GM10248 (cell line): ENCODE measurements at regions of chr9 and their contacts with region 1.

Region 1: GRCh38 chr9:123544007-123544827 is 188.2 kb downstream of the CRB2 start:
- DNase-seq: peak; percentile 50
- CTCF ChIP-seq: peak; percentile 82

Region 2: DNA sequence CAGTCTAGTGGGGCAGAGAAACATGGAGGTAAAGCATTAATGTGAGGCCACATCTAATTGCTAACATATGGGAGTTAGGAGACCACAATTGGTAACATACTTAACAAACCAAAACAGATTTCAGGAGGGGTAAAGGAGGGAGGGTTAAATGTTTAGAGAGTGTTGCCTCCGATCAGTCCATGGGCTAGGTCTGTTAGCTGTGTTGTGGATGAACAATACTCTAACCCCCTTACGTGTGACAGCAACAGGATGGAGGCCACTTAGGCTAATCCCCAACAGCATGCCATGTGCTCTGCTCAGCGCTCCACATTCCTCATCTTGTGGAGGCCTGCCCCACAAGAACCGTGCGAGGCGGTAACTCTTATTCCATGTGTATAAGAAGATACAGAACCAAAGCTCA is 21.2 kb before region 1 on chr9:
- CTCF ChIA-PET with region 1: interaction called, 10 read pairs
- POLR2A ChIA-PET with region 1: no interaction called
- DNase-seq: no peak
- CTCF ChIP-seq: no peak

Region 3: DNA sequence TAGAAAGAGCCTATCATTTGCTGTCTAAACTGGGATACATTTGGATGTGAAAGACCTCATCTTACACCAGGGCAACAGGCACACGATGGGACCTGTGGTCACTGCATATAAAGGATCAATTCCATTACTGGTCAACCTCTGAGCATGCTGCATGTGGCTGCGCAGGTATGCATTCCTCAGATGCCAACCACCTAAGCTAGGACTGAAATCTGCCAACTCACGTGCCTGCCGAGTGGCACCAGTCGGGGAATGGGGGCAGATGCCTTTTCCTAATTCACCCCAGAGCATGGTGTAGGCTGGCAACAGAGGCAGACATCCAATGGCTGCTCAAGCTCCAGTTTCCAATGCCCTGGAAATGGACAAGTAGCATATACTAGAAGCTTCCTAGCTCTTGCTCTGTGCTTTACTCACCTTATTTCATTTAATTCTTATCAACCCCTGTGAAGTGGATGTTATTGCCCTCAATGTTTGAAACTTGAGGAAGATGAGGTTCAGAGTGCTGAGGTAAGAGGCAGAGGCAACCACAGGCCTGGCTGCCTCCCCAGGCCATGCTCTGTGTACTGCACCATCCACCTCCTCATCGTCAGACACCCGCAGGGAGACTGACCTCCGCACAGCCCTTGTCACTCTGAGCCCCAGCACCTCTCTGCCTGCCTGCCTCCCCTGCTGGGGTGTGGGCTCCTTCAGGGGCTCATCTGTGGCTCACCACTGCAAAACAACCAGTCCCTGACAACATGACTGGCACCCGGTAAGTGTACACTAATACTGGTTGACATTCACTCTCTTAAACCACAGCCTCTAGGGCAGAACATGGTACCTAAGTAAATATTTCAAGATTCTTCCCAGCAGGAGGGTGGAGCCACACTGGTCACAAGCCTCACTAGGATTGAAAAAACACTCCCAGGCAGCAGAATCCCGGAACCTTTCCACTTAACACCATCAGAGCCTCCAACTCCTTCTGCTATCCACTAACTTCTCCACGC is 40.3 kb after region 1 on chr9:
- CTCF ChIA-PET with region 1: no interaction called
- POLR2A ChIA-PET with region 1: no interaction called
- DNase-seq: no peak
- CTCF ChIP-seq: no peak